ENCODE measurements at regions of chr10 and their contacts with region 1.

Region 1: GRCh38 chr10:27658788-27659187 is 86.8 kb downstream of the MKX start:
- DNase-seq: no peak
- ATAC-seq: no peak
- H3K4me3 ChIP-seq: no peak overlapping the region
- H3K27ac ChIP-seq: no peak overlapping the region
- H3K4me1 ChIP-seq: no peaks in the 10 kb centered on the region
- H3K27me3 ChIP-seq: no peaks in the 10 kb centered on the region
- CTCF ChIP-seq: no peak

Region 2: DNA sequence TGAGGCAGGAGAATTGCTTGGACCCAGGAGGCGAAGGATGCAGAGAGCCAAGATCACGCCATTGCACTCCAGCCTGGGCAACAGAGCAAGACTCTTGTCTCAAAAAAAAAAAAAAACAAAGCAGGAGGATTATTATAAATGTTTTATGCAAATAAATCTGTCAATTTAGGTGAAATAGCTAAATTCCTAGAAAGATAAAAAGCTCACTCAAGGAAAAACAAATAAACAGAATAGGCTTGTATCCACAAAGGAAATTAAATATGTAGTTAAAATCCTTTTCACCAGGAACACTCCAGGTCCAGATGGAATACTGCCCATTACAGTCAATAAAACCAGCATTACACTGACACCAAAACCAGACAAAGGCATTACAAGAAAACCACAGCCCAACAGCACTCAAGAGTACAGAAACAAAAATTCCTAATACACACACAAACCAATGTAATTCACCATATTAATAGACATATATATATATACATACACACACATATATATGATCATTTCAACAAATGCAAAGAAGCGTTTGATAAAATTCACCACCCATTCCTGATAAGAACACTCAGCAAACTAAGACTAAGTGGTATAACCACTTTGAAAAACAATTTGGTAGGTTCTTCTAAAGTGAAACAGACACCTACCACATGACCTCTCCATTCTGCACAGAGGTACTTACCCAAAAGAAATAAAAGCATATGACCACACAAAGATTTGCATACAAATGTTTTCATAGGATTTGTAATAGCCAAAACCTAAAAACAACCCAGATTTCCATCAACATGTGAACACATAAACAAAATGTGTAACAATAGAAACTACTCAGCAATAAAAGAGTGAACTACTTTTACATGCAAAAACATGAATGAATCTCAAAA is 836.9 kb before region 1 on chr10:
- intact Hi-C with region 1: no loop called
- DNase-seq: no peak
- ATAC-seq: no peak
- H3K4me3 ChIP-seq: no peak overlapping the region
- H3K27ac ChIP-seq: no peak overlapping the region
- H3K4me1 ChIP-seq: no peaks in the 10 kb centered on the region
- H3K27me3 ChIP-seq: no peaks in the 10 kb centered on the region
- CTCF ChIP-seq: no peak

Region 3: GRCh38 chr10:27446091-27446918 is 212.5 kb before region 1 on chr10:
- intact Hi-C with region 1: loop called (anchors 10 kb)
- DNase-seq: no peak
- ATAC-seq: peak in 1 of 2 donors; percentile 68
- H3K4me3 ChIP-seq: no peak overlapping the region
- H3K27ac ChIP-seq: no peak overlapping the region
- H3K4me1 ChIP-seq: no peaks in the 10 kb centered on the region
- H3K27me3 ChIP-seq: no peaks in the 10 kb centered on the region
- CTCF ChIP-seq: peak; percentile 49

Region 4: DNA sequence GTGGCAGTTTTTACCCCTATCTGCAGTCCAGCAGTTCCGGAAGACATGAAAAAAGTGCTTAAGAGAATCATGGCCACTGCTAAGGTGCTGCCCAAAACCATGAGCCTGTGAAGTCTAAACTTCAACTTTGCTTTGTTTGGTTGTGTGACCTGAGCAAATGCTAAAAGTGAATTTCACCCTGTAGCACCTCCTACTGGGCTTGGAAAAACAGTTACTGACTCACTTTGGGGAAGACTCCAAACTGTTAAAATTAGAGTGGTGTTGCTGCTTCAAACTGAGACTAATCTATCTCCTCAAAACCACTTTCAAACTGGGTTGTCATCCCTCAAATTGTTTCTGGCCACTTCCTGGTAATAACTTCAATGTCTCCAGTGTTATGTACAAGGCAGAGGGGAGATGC is 65.5 kb after region 1 on chr10:
- intact Hi-C with region 1: no loop called
- DNase-seq: no peak
- ATAC-seq: no peak
- H3K4me3 ChIP-seq: no peak overlapping the region
- H3K27ac ChIP-seq: no peak overlapping the region
- H3K4me1 ChIP-seq: no peaks in the 10 kb centered on the region
- H3K27me3 ChIP-seq: no peaks in the 10 kb centered on the region
- CTCF ChIP-seq: no peak